Gastrocnemius medialis (tissue), 4 donors: ENCODE measurements at regions of chr1 and their contacts with region 1.

Region 1: GRCh38 chr1:43529206-43529731 is 1.4 kb upstream of the PTPRF start:
- DNase-seq: peak; percentile 61 to 69
- ATAC-seq: peak; percentile 87 to 89
- H3K4me3 ChIP-seq: no peak overlapping the region
- H3K27ac ChIP-seq: no peak overlapping the region
- H3K4me1 ChIP-seq: peaks cover 0 to 4% of the 10 kb centered on the region in 2 donors
- H3K27me3 ChIP-seq: no peaks in the 10 kb centered on the region
- CTCF ChIP-seq: peak; percentile 89 to 97 (median 92)
- POLR2A ChIP-seq: no peak

Region 2: DNA sequence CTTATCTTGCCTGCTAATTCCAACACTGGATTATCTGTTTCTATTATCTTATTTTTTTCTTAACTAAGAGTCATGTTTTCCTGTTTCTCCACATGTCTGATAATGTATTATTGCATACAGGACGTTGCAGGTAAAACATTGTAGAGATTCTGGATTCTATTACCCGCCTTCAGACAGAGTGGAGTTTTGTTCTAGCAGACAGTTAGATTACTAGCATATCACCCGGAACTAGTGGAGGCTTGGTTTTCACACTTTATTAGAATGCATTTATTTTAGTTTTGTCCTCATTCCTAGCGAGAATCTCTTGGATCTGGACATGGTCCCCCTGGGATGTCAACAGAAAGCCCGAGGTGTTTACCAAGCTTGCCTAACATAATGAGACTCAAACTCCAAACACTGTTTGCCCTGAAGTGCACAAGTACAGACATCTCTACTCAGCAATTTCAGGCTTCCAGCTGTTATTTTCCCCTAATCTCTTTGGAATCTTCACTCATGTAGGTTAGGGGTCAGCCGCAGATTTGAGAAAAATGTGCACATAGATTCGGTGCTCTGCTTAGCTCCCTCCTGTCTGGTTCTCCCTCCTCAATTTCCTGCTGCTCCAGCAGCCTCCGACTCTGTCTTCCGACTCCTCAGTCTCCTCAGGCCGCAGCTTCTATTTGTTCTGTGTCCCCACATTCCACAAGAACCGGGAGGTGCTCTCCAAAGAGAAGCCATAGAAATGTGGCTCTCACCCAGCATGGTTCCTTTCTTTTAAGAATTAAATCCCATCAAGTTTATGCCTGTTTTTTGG is 35.4 kb before region 1 on chr1:
- in situ Hi-C with region 1: no loop called
- intact Hi-C with region 1: no loop called
- DNase-seq: no peak
- ATAC-seq: no peak
- H3K4me3 ChIP-seq: no peak overlapping the region
- H3K27ac ChIP-seq: no peak overlapping the region
- H3K4me1 ChIP-seq: no peaks in the 10 kb centered on the region
- H3K27me3 ChIP-seq: no peaks in the 10 kb centered on the region
- CTCF ChIP-seq: no peak
- POLR2A ChIP-seq: no peak

Region 3: GRCh38 chr1:43541734-43542401 is 12.6 kb after region 1 on chr1:
- in situ Hi-C with region 1: no loop called
- intact Hi-C with region 1: loop called (anchors 2 kb)
- DNase-seq: peak; percentile 72 to 85
- ATAC-seq: peak; percentile 72 to 86
- H3K4me3 ChIP-seq: no peak overlapping the region
- H3K27ac ChIP-seq: peak overlapping the region in 3 of 4 donors; percentile 34 to 60 (median 52)
- H3K4me1 ChIP-seq: no peaks in the 10 kb centered on the region
- H3K27me3 ChIP-seq: no peaks in the 10 kb centered on the region
- CTCF ChIP-seq: no peak
- POLR2A ChIP-seq: no peak

Region 4: GRCh38 chr1:43650310-43651085 is 121.2 kb after region 1 on chr1:
- in situ Hi-C with region 1: no loop called
- intact Hi-C with region 1: loop called (anchors 1 kb)
- DNase-seq: peak; percentile 97
- ATAC-seq: peak; percentile 97
- H3K4me3 ChIP-seq: peak overlapping the region; percentile 85 to 93 (median 90)
- H3K27ac ChIP-seq: peak overlapping the region; percentile 92 to 99 (median 96)
- H3K4me1 ChIP-seq: peaks cover 15 to 23% of the 10 kb centered on the region in 2 donors
- H3K27me3 ChIP-seq: no peaks in the 10 kb centered on the region
- CTCF ChIP-seq: no peak
- POLR2A ChIP-seq: peak; percentile 92 to 94

Region 5: DNA sequence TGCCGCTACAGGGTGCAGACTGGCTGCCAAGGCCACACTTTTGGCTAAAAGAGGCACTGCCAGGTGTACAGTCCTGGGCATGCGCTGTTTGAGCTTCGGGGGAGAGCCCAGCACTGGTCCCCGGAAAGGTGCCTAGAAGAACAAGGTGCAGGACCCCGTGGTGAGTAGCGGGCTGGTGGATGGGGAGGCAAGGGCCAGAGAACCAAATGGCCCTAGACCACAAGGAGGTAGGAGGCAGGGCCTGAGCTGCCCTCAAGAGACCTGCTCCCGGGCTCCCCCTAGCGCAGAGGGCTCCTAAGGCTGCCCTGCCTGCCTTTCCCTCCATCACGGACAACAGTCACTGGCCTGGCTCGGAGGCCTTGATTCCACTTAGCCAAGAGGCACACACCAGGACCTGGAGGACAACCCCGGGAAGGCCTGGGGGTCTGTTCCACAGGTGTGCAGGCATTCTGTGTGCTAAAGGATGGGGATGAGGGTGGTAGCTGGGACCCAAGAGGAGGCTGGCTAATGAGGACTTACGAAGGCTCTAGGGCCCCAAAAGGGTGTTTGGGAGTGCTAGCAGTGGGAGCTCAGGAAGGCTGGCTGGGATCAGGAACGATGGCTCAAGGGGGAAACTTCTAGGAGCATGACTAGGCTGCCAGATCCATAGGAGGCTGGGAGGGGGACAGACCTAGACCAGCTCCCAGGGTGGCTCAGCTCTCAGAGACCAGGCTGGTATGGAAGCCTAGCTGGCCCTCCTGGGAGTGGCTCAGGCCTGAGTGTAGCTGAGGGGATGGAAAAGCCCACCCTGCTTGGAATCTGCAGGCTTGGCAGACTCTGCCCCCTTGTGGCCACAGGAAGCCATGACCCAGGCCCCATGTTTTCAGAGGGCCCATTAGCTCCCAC is 405.1 kb after region 1 on chr1:
- in situ Hi-C with region 1: loop called in 3 of 4 experiments (anchors 10 to 25 kb)
- intact Hi-C with region 1: loop called (anchors 5 kb)
- DNase-seq: peak in 1 of 2 donors; percentile 72
- ATAC-seq: peak; percentile 62 to 70
- H3K4me3 ChIP-seq: peak overlapping the region in 3 of 4 donors; percentile 45 to 54 (median 46)
- H3K27ac ChIP-seq: peak overlapping the region in 3 of 4 donors; percentile 2 to 39 (median 30)
- H3K4me1 ChIP-seq: peaks cover 27 to 28% of the 10 kb centered on the region in 2 donors
- H3K27me3 ChIP-seq: no peaks in the 10 kb centered on the region
- CTCF ChIP-seq: peak; percentile 75 to 93 (median 86)
- POLR2A ChIP-seq: no peak

Region 6: DNA sequence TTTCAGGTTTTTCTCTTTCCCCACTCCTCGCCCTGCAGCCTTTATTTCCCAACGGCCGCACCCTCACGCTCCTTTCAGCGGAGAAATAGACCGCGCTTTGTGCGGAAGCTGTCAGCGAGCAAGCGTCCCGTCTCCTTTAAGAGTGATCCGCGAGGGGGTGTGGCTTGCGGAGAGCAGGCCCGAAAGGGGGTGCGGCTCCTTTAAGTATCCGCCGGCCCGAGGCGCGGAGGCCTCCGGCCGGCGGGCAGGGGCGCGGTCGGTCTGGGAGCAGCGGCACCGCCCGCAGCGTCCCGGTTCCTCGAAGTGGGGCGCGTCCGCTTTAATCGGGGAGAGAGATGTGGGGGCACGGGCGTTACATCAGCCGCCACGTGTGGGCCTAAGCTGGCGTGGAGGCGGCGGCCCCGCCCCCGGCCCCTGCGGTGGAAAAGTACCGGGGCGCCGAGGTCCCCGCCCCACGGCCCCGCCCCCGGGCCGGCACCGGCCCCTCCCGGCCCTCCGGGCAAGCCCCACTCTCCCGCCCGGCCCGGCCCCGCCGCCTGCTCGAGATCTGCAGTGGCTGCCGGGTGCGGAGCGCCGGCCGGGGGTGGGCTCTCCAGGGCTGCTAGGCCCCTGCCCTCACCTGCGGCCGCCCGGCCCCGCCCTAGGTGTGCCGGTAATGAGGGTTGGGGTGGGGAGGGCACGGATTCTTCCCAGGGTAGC is 500.8 kb after region 1 on chr1:
- in situ Hi-C with region 1: loop called in 2 of 4 experiments (anchors 25 kb)
- intact Hi-C with region 1: no loop called
- DNase-seq: peak; percentile 82 to 85
- ATAC-seq: peak; percentile 90 to 92
- H3K4me3 ChIP-seq: peak overlapping the region; percentile 78 to 92 (median 82)
- H3K27ac ChIP-seq: peak overlapping the region; percentile 77 to 95 (median 91)
- H3K4me1 ChIP-seq: peaks cover 7 to 22% of the 10 kb centered on the region in 2 donors
- H3K27me3 ChIP-seq: no peaks in the 10 kb centered on the region
- CTCF ChIP-seq: no peak
- POLR2A ChIP-seq: peak; percentile 57 to 78

Region 7: DNA sequence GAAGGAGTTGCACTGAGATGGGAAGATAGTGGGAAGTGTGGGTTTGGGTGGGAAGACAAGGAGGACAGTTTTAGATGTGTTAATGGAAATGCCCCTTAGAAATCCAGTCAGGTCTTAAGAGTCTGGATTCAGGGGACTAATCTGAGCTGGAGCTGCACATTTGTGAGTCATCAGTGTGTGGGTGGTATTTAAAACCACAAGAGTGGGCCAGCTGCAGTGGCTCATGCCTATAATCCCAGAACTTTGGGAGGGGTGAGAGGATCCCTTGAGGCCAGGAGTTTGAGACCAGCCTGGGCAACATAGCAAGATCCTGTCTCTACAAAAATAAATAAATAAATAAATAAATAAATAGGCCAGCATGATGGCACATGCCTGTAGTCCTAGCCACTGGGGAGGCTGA is 542.9 kb after region 1 on chr1:
- in situ Hi-C with region 1: loop called in 1 of 4 experiments (anchors 25 kb)
- intact Hi-C with region 1: no loop called
- DNase-seq: no peak
- ATAC-seq: no peak
- H3K4me3 ChIP-seq: no peak overlapping the region
- H3K27ac ChIP-seq: no peak overlapping the region
- H3K4me1 ChIP-seq: no peaks in the 10 kb centered on the region
- H3K27me3 ChIP-seq: peaks cover 0 to 3% (median 2%) of the 10 kb centered on the region in 3 donors
- CTCF ChIP-seq: no peak
- POLR2A ChIP-seq: no peak